Heart right ventricle (tissue), 16 donors: ENCODE measurements at regions of chr7 and their contacts with region 1.

Region 1: DNA sequence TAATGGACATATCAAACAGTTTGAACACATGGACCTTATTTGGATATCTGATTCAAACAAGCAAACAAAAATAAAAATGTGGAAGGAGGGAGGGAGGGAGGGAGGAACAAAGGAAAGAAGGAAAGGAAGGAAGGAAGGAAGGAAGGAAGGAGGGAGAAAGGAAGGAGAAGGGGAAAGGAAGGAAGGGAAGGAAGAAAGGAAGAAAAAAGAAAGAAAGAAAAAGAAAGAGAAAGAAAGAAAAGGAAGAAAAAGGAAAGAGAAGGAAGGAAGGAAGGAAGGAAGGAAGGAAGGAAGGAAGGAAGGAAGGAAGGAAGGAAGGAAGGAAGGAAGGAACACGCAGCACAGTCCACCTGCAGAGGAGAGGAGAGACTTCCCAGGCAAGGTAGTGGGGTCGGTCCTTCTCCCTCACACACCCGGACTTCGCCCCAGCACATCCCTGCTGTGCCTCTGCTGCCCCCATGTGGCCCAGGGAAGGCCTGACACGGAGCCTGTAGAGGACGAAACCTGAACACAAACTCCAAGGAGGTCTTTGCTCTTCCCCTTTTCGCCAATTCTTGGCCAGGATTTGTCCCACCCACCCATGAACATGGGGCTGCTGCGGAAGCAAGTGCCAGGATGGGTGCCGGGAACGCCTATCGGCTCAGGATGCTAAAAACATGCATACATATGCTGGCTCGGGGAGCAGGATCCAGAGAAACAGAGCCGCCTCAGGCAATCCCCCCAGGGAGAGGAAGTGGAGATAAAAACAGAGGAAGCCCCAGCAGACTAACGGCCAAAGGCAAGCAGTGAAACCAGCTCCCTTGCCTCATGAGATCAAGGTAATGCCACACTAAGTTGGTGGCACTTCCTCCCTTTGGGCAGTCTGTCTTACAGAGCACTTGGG is 52.3 kb upstream of the DGKI start:
- DNase-seq: peak; percentile 83 to 85
- ATAC-seq: peak; percentile 86 to 96 (median 93)
- H3K4me3 ChIP-seq: peak overlapping the region in 3 of 10 donors; percentile 19 to 22 (median 22)
- H3K27ac ChIP-seq: peak overlapping the region in 9 of 10 donors; percentile 9 to 75 (median 61)
- H3K4me1 ChIP-seq: peaks cover 2 to 38% (median 21%) of the 10 kb centered on the region in 9 donors
- H3K27me3 ChIP-seq: no peaks in the 10 kb centered on the region
- CTCF ChIP-seq: peak; percentile 90 to 97 (median 95)

Region 2: GRCh38 chr7:137606061-137606674 is 292.9 kb before region 1 on chr7:
- intact Hi-C with region 1: loop called in 4 of 10 experiments (anchors 2 to 5 kb)
- DNase-seq: no peak
- ATAC-seq: no peak
- H3K4me3 ChIP-seq: no peak overlapping the region
- H3K27ac ChIP-seq: no peak overlapping the region
- H3K4me1 ChIP-seq: no peaks in the 10 kb centered on the region
- H3K27me3 ChIP-seq: peaks cover 0 to 9% (median 6%) of the 10 kb centered on the region in 7 donors
- CTCF ChIP-seq: peak in 8 of 9 donors; percentile 13 to 74 (median 62)

Region 3: DNA sequence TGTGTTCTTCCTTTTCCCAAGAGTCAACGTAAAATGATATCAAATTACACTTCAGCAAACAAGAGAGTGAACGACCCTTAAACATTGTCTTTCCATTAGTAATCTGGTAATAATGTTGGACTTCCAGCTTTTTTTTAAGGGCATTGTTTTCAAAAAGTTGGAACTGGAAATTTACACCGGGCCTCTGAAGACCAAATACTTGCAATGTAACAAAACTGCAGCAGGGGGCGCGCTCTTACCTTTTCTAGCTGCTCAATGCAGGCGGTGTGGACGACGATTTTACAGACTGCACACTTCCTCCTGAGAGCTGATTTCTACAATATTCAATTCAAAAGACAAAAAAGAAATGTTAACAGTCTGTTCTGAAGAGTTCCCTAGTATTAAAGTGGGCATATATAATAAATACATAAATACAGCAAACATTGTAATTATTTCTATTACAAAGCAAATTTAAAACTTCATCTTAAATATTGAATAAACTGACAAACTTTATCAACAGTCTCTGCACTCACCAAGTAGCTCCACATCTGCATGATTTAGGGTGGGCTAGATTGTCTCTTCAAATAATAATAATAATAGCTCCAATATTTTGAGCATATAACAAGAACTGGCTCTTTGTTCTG is 242.7 kb before region 1 on chr7:
- intact Hi-C with region 1: loop called (anchors 1 to 5 kb)
- DNase-seq: peak; percentile 72 to 79
- ATAC-seq: peak in 7 of 8 donors; percentile 75 to 92 (median 84)
- H3K4me3 ChIP-seq: no peak overlapping the region
- H3K27ac ChIP-seq: peak overlapping the region in 4 of 10 donors; percentile 6 to 49 (median 40)
- H3K4me1 ChIP-seq: peaks cover 0 to 30% (median 15%) of the 10 kb centered on the region in 9 donors
- H3K27me3 ChIP-seq: no peaks in the 10 kb centered on the region
- CTCF ChIP-seq: peak; percentile 62 to 91 (median 88)

Region 4: GRCh38 chr7:137816696-137817320 is 82.3 kb before region 1 on chr7:
- intact Hi-C with region 1: loop called in 6 of 10 experiments (anchors 2 to 10 kb)
- DNase-seq: no peak
- ATAC-seq: peak in 1 of 8 donors; percentile 38
- H3K4me3 ChIP-seq: no peak overlapping the region
- H3K27ac ChIP-seq: no peak overlapping the region
- H3K4me1 ChIP-seq: peaks cover 0 to 14% (median 10%) of the 10 kb centered on the region in 9 donors
- H3K27me3 ChIP-seq: no peaks in the 10 kb centered on the region
- CTCF ChIP-seq: peak in 7 of 9 donors; percentile 23 to 50 (median 43)

Region 5: DNA sequence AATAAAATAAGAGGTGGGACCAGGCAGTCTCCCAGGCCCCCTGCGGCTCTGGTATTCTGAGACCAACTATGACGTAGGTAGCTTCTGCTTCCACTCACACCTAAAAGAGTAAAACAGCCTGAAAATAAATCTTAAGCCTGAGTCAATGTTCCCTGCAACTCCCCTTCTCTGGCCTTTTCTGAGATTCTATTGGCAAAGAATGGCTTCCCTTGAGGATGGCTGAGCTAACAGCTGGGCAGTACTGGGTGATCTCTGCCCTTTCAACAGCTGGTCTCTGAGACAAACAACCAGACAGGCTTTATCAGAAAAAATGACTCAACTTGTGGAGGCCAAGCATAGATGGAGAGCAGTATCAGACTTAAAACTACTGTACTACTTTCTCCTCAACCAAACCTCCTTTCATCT is 44.1 kb after region 1 on chr7:
- intact Hi-C with region 1: no loop called
- DNase-seq: peak in 1 of 2 donors; percentile 69
- ATAC-seq: peak; percentile 82 to 92 (median 90)
- H3K4me3 ChIP-seq: no peak overlapping the region
- H3K27ac ChIP-seq: peak overlapping the region in 9 of 10 donors; percentile 2 to 82 (median 69)
- H3K4me1 ChIP-seq: peaks cover 0 to 70% (median 41%) of the 10 kb centered on the region in 9 donors
- H3K27me3 ChIP-seq: no peaks in the 10 kb centered on the region
- CTCF ChIP-seq: no peak

Region 6: GRCh38 chr7:138008547-138009349 is 109.7 kb after region 1 on chr7:
- intact Hi-C with region 1: loop called (anchors 1 to 2 kb)
- DNase-seq: peak in 1 of 2 donors; percentile 21
- ATAC-seq: peak; percentile 40 to 80 (median 58)
- H3K4me3 ChIP-seq: no peak overlapping the region
- H3K27ac ChIP-seq: no peak overlapping the region
- H3K4me1 ChIP-seq: peaks cover 0 to 5% (median 0%) of the 10 kb centered on the region in 9 donors
- H3K27me3 ChIP-seq: no peaks in the 10 kb centered on the region
- CTCF ChIP-seq: peak; percentile 86 to 96 (median 92)

Region 7: GRCh38 chr7:138205614-138206150 is 306.6 kb after region 1 on chr7:
- intact Hi-C with region 1: loop called in 1 of 10 experiments (anchors 5 kb)
- DNase-seq: no peak
- ATAC-seq: no peak
- H3K4me3 ChIP-seq: no peak overlapping the region
- H3K27ac ChIP-seq: no peak overlapping the region
- H3K4me1 ChIP-seq: peaks cover 0 to 11% (median 0%) of the 10 kb centered on the region in 9 donors
- H3K27me3 ChIP-seq: no peaks in the 10 kb centered on the region
- CTCF ChIP-seq: no peak

Region 8: GRCh38 chr7:138738551-138739335 is 839.7 kb after region 1 on chr7:
- intact Hi-C with region 1: loop called in 3 of 10 experiments (anchors 5 to 10 kb)
- DNase-seq: peak; percentile 74 to 78
- ATAC-seq: peak in 7 of 8 donors; percentile 43 to 88 (median 84)
- H3K4me3 ChIP-seq: no peak overlapping the region
- H3K27ac ChIP-seq: no peak overlapping the region
- H3K4me1 ChIP-seq: no peaks in the 10 kb centered on the region
- H3K27me3 ChIP-seq: no peaks in the 10 kb centered on the region
- CTCF ChIP-seq: peak; percentile 72 to 96 (median 90)